ENCODE measurements at regions of chr14 and their contacts with region 1.

Region 1: GRCh38 chr14:64444984-64445845 is 20.1 kb upstream of the AKAP5 start:
- DNase-seq: peak in 1 of 4 experiments; percentile 16
- ATAC-seq: peak; percentile 54; the same call in 2 of the 3 replicates
- H3K4me3 ChIP-seq: no peak overlapping the region
- H3K27ac ChIP-seq: peak overlapping the region; percentile 63; the same call in 1 of the 3 replicates
- H3K4me1 ChIP-seq: no peaks in the 10 kb centered on the region
- H3K27me3 ChIP-seq: no peaks in the 10 kb centered on the region
- CTCF ChIP-seq: no peak
- EP300 ChIP-seq: no peak
- POLR2A ChIP-seq: no peak
- RAD21 ChIP-seq: no peak

Region 2: GRCh38 chr14:64421166-64421565 is 24.0 kb before region 1 on chr14:
- CTCF ChIA-PET with region 1: no interaction called
- POLR2A ChIA-PET with region 1: interaction called, 3 read pairs
- in situ Hi-C with region 1: no loop called
- intact Hi-C with region 1: loop called (anchors 1 kb)
- DNase-seq: no peak
- ATAC-seq: no peak
- H3K4me3 ChIP-seq: no peak overlapping the region
- H3K27ac ChIP-seq: no peak overlapping the region
- H3K4me1 ChIP-seq: no peaks in the 10 kb centered on the region
- H3K27me3 ChIP-seq: no peaks in the 10 kb centered on the region
- CTCF ChIP-seq: no peak
- EP300 ChIP-seq: no peak
- POLR2A ChIP-seq: no peak
- RAD21 ChIP-seq: no peak

Measured in K562 (cell line).